Mammary epithelial cell (primary cell): ENCODE measurements at regions of chr9 and their contacts with region 1.

Region 1: GRCh38 chr9:88808019-88808653 is 183.1 kb upstream of the S1PR3 start:
- DNase-seq: no peak
- H3K4me3 ChIP-seq: no peak overlapping the region
- H3K27ac ChIP-seq: no peak overlapping the region
- H3K4me1 ChIP-seq: peaks cover 3% of the 10 kb centered on the region
- H3K27me3 ChIP-seq: no peaks in the 10 kb centered on the region
- CTCF ChIP-seq: no peak

Region 2: GRCh38 chr9:88706193-88707118 is 101.7 kb before region 1 on chr9:
- CTCF ChIA-PET with region 1: no interaction called
- dilution Hi-C with region 1: no loop called
- in situ Hi-C with region 1: no loop called
- intact Hi-C with region 1: no loop called
- DNase-seq: no peak
- H3K4me3 ChIP-seq: no peak overlapping the region
- H3K27ac ChIP-seq: no peak overlapping the region
- H3K4me1 ChIP-seq: no peaks in the 10 kb centered on the region
- H3K27me3 ChIP-seq: no peaks in the 10 kb centered on the region
- CTCF ChIP-seq: no peak

Region 3: GRCh38 chr9:88753691-88754367 is 54.3 kb before region 1 on chr9:
- CTCF ChIA-PET with region 1: no interaction called
- dilution Hi-C with region 1: loop called (anchors 5 kb)
- in situ Hi-C with region 1: no loop called
- intact Hi-C with region 1: no loop called
- DNase-seq: no peak
- H3K4me3 ChIP-seq: no peak overlapping the region
- H3K27ac ChIP-seq: no peak overlapping the region
- H3K4me1 ChIP-seq: peaks cover 5% of the 10 kb centered on the region
- H3K27me3 ChIP-seq: no peaks in the 10 kb centered on the region
- CTCF ChIP-seq: no peak